Heart right ventricle (tissue), 16 donors: ENCODE measurements at regions of chr17 and their contacts with region 1.

Region 1: DNA sequence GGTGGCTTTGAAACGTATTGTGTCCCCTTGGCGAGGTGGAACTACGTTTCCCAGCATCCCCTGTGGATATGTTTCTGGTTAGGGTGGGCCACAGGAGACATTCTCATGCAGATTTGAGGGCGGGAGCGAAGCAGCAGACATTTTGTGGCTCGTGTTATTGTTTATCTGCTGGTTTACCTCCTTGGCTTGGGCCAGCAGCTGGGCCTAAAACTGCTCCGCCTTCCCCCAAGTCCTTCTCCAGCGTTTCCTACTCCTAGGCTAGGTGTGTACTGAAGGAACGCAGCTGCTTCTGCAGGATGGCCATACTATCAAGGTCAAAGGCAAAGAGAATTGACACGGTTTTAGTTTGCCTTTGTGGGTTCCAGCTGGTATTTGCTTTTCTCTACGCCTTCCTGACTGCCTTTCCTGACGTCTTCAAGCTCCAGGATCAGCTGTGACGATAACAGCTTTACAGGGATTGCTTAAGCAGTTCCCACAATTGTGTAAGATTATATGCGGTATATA is 17.2 kb upstream of the WSB1 start:
- DNase-seq: no peak
- ATAC-seq: no peak
- H3K4me3 ChIP-seq: no peak overlapping the region
- H3K27ac ChIP-seq: no peak overlapping the region
- H3K4me1 ChIP-seq: peaks cover 0 to 35% (median 0%) of the 10 kb centered on the region in 9 donors
- H3K27me3 ChIP-seq: no peaks in the 10 kb centered on the region
- CTCF ChIP-seq: no peak

Region 2: GRCh38 chr17:27217631-27218030 is 59.1 kb before region 1 on chr17:
- intact Hi-C with region 1: loop called in 1 of 10 experiments (anchors 10 kb)
- DNase-seq: no peak
- ATAC-seq: no peak
- H3K4me3 ChIP-seq: no peak overlapping the region
- H3K27ac ChIP-seq: no peak overlapping the region
- H3K4me1 ChIP-seq: peaks cover 0 to 15% (median 0%) of the 10 kb centered on the region in 9 donors
- H3K27me3 ChIP-seq: peaks cover 0 to 8% (median 0%) of the 10 kb centered on the region in 7 donors
- CTCF ChIP-seq: no peak